Psoas muscle (tissue), 8 donors: ENCODE measurements at regions of chr15 and their contacts with region 1.

Region 1: DNA sequence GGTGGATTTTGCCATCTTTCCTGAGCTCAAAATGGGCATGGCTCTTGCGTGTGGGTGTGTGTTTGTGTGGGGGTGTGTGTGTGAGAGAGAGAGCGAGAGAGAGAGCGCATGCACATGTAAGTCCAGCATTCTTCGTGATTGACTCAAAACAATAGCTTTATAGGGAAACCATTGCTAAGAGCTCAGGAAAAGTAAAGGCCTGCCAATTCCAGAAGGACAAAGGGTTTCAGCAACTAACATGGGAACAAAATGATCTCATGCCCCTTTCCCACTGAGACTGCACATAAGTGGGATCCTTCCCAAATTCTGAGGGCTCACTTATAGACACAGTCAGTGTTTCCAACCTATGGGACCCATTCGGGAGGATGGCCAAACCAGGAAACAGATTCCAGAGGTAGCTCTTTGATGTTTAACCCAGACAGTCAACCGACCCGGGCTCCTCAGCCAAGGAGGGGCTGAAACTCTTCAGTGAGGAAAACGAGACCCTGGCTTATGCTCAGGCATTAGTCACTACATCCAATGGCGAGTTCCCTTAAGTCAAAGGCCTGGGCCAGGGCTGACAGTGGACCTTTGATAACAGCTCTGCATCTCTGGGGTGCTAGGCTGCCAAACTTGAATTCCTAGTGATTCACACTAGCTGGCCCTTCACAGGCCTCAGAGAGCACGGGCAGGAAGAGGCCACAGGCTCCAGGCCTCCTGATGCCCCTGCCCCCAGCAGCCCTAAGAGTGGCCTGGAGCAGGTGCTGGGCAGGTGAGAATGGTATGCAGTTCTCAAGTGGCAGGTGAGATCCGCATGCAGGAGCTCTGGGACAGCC is 305.0 kb upstream of the C2CD4B start:
- DNase-seq: peak; percentile 67 to 78
- ATAC-seq: peak; percentile 54 to 77 (median 62)
- H3K4me3 ChIP-seq: no peak overlapping the region
- H3K27ac ChIP-seq: peak overlapping the region; percentile 82
- H3K4me1 ChIP-seq: peaks cover 51% of the 10 kb centered on the region
- H3K27me3 ChIP-seq: no peaks in the 10 kb centered on the region
- CTCF ChIP-seq: no peak

Region 2: GRCh38 chr15:62513893-62514292 is 43.8 kb after region 1 on chr15:
- intact Hi-C with region 1: loop called in 1 of 2 experiments (anchors 5 kb)
- DNase-seq: no peak
- ATAC-seq: no peak
- H3K4me3 ChIP-seq: no peak overlapping the region
- H3K27ac ChIP-seq: peak overlapping the region; percentile 79
- H3K4me1 ChIP-seq: peaks cover 45% of the 10 kb centered on the region
- H3K27me3 ChIP-seq: no peaks in the 10 kb centered on the region
- CTCF ChIP-seq: no peak